PC-3 (cell line): ENCODE measurements at regions of chr3 and their contacts with region 1.

Region 1: DNA sequence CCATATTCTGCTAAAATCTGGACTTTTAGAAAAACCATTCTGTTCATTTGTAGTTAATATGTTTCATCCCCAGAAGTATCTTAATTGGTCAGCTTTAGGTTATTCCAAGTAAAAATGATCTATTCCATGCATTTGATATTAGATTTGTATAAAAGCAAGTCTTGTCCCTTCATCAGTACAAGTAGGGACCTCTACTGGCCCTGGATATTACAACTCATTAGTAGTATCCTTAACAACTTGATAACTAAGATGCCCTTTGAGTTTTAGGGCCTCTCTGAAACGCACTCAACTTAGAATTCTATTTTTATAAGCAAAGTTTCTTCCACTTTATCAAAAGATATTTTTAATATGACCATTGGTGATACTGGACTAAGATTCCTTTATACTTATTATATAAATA is 25.3 kb upstream of the SELENOT start:
- DNase-seq: peak; percentile 18
- ATAC-seq: peak; percentile 62
- H3K4me3 ChIP-seq: no peak overlapping the region
- H3K27ac ChIP-seq: no peak overlapping the region
- H3K4me1 ChIP-seq: no peaks in the 10 kb centered on the region
- H3K27me3 ChIP-seq: no peaks in the 10 kb centered on the region
- CTCF ChIP-seq: peak; percentile 48

Region 2: GRCh38 chr3:149553781-149554451 is 1023.9 kb before region 1 on chr3:
- CTCF ChIA-PET with region 1: no interaction called
- POLR2A ChIA-PET with region 1: no interaction called
- intact Hi-C with region 1: no loop called
- DNase-seq: no peak
- ATAC-seq: no peak
- H3K4me3 ChIP-seq: peak overlapping the region; percentile 16; the same call in 1 of the 2 replicates
- H3K27ac ChIP-seq: peak overlapping the region; percentile 93
- H3K4me1 ChIP-seq: peaks cover 51% of the 10 kb centered on the region
- H3K27me3 ChIP-seq: no peaks in the 10 kb centered on the region
- CTCF ChIP-seq: no peak

Region 3: GRCh38 chr3:150528354-150528797 is 49.5 kb before region 1 on chr3:
- CTCF ChIA-PET with region 1: interaction called, 3 read pairs
- POLR2A ChIA-PET with region 1: no interaction called
- intact Hi-C with region 1: loop called (anchors 2 kb)
- DNase-seq: peak; percentile 56
- ATAC-seq: no peak; the same call in 1 of the 2 replicates
- H3K4me3 ChIP-seq: no peak overlapping the region
- H3K27ac ChIP-seq: no peak overlapping the region
- H3K4me1 ChIP-seq: no peaks in the 10 kb centered on the region
- H3K27me3 ChIP-seq: no peaks in the 10 kb centered on the region
- CTCF ChIP-seq: peak; percentile 61